ENCODE measurements at regions of chr19 and their contacts with region 1.

Region 1: GRCh38 chr19:11987405-11988281 is 22.8 kb downstream of the ZNF763 start:
- DNase-seq: peak; percentile 97
- H3K4me3 ChIP-seq: peak overlapping the region; percentile 70 to 86 (median 78)
- H3K27ac ChIP-seq: peak overlapping the region; percentile 89 to 94 (median 92)
- H3K4me1 ChIP-seq: peaks cover 0 to 9% (median 4%) of the 10 kb centered on the region in 4 donors
- H3K27me3 ChIP-seq: no peaks in the 10 kb centered on the region
- CTCF ChIP-seq: no peak
- EP300 ChIP-seq: no peak
- POLR2A ChIP-seq: peak; percentile 85

Region 2: GRCh38 chr19:11887611-11888531 is 99.8 kb before region 1 on chr19 and contains the start of gene ZNF69:
- in situ Hi-C with region 1: loop called in 1 of 4 experiments (anchors 25 kb)
- intact Hi-C with region 1: no loop called
- DNase-seq: peak; percentile 94
- H3K4me3 ChIP-seq: peak within 1 kb of the TSS; percentile 53 to 73 (median 58)
- H3K27ac ChIP-seq: peak within 1 kb of the TSS; percentile 88 to 95 (median 94)
- H3K4me1 ChIP-seq: peaks cover 0 to 33% (median 20%) of the 10 kb centered on the region in 4 donors
- H3K27me3 ChIP-seq: no peaks in the 10 kb centered on the region
- CTCF ChIP-seq: peak; percentile 12 to 46 (median 18)
- EP300 ChIP-seq: no peak
- POLR2A ChIP-seq: peak; percentile 68
- total RNA-seq, gene ZNF69: 27.4 to 42.6 (median 29.9) TPM

Region 3: DNA sequence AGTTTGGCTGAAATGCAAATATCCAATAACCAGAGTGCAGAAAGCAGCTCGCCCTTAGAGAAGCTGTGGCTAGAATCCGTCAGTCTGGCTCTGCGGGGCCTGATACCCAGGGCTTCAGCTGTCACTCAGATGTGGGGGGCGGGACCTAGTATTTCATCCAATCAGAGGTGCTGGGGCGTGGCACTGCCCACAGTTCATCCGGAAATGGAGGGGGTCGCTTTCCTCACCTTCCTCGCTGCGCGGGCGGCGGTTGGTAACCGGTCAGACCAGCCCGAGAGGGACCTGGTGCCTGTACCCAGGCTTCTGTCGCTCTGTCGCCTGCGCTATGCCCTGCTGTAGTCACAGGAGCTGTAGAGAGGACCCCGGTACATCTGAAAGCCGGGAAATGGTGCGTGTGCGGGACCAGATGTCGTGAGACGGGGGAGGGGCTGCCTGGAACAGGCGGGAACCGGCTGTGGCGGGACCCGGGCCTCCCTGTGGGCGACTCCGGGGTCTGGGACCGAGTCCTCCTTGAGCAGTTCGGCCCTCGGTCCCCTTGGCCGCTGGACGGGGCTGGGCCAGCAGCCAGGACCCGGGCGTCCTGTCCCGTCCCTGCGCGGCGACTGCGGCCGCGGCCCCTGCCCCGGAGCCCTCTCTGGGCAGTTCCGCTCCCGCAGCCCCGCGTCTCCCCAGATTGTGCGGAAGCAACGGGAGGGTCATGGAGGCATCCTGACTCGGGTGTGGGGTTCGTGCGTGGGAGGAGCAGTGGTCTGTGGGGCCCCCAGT is 62.6 kb before region 1 on chr19 and contains the start of gene ZNF700:
- in situ Hi-C with region 1: no loop called
- intact Hi-C with region 1: loop called (anchors 5 kb)
- DNase-seq: peak; percentile 97
- H3K4me3 ChIP-seq: peak within 1 kb of the TSS; percentile 82 to 93 (median 90)
- H3K27ac ChIP-seq: peak within 1 kb of the TSS; percentile 97 to 100 (median 98)
- H3K4me1 ChIP-seq: peaks cover 11 to 25% (median 18%) of the 10 kb centered on the region in 4 donors
- H3K27me3 ChIP-seq: no peaks in the 10 kb centered on the region
- CTCF ChIP-seq: no peak
- EP300 ChIP-seq: peak; percentile 29
- POLR2A ChIP-seq: peak; percentile 93
- total RNA-seq, gene ZNF700: 25.8 to 38.3 (median 29.1) TPM

Region 4: GRCh38 chr19:11964858-11965645 is 22.6 kb before region 1 on chr19 and contains the start of gene ZNF763:
- in situ Hi-C with region 1: no loop called
- intact Hi-C with region 1: loop called (anchors 1 kb)
- DNase-seq: peak; percentile 98
- H3K4me3 ChIP-seq: peak within 1 kb of the TSS; percentile 67 to 90 (median 75)
- H3K27ac ChIP-seq: peak within 1 kb of the TSS; percentile 89 to 99 (median 94)
- H3K4me1 ChIP-seq: peaks cover 7 to 23% (median 17%) of the 10 kb centered on the region in 4 donors
- H3K27me3 ChIP-seq: no peaks in the 10 kb centered on the region
- CTCF ChIP-seq: no peak
- EP300 ChIP-seq: no peak
- POLR2A ChIP-seq: peak; percentile 54
- total RNA-seq, gene ZNF763: 7.1 to 15.1 (median 9.5) TPM

Region 5: DNA sequence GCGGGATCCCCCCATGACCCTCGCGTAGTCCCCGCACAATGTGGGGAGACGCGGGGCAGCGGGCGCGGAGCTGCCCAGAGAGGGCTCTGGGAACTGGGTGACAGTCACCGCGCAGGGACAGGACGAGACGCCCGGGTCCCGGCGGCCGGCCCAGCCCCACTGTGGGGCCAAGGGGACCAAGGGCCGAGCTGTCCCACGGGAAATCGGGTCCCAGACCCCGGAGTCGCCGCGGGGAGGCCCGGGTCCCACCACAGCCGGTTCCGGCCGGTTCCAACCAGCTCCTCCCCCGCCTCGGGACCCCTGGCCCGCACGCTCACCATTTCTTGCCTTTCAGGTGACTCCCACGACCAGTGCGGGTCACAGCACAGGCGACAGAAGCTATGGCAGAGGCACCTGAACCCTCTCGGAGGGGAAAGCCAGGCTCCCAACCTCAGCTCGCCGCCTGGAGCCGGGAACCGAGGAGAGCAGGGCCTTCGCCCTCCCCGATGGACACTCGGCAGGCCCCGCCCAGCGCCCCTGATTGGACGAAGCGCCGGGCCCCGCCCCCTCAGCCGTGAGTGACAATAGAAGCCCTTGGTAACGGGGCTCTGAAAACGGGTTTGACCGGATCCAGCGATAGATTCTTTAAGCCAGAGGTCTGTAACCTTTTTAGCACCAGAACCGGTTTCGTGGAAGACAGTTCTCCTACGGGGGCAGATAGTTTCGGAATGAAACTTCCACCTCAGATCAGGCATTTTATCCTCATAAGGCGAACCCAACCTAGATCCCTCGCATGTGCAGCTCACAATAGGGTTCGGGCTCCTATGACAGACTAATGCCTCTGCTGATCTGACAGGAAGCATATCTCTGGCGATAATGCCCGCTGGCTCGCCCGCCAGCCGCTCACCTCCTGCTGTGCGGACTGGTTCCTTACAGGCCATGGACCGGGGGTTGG is 47.8 kb after region 1 on chr19 and contains the start of gene ZNF433:
- in situ Hi-C with region 1: no loop called
- intact Hi-C with region 1: no loop called
- DNase-seq: peak; percentile 96
- H3K4me3 ChIP-seq: peak within 1 kb of the TSS; percentile 66 to 94 (median 75)
- H3K27ac ChIP-seq: peak within 1 kb of the TSS; percentile 81 to 85 (median 84)
- H3K4me1 ChIP-seq: peaks cover 0 to 23% (median 7%) of the 10 kb centered on the region in 4 donors
- H3K27me3 ChIP-seq: no peaks in the 10 kb centered on the region
- CTCF ChIP-seq: peak in 1 of 5 experiments; percentile 11
- EP300 ChIP-seq: no peak
- POLR2A ChIP-seq: peak; percentile 43
- total RNA-seq, gene ZNF433: 3.2 to 13.5 (median 4.7) TPM